Aorta (tissue), 5 donors: ENCODE measurements at regions of chr22 and their contacts with region 1.

Region 1: GRCh38 chr22:28800308-28801077 is at the start of gene XBP1:
- DNase-seq: peak; percentile 97 to 98
- ATAC-seq: peak; percentile 98
- H3K4me3 ChIP-seq: peak within 1 kb of the TSS; percentile 83 to 91
- H3K27ac ChIP-seq: peak within 1 kb of the TSS; percentile 97 to 100
- H3K4me1 ChIP-seq: peaks cover 0 to 4% of the 10 kb centered on the region in 2 donors
- H3K27me3 ChIP-seq: no peaks in the 10 kb centered on the region
- total RNA-seq, gene XBP1: 118 to 143 TPM

Region 2: DNA sequence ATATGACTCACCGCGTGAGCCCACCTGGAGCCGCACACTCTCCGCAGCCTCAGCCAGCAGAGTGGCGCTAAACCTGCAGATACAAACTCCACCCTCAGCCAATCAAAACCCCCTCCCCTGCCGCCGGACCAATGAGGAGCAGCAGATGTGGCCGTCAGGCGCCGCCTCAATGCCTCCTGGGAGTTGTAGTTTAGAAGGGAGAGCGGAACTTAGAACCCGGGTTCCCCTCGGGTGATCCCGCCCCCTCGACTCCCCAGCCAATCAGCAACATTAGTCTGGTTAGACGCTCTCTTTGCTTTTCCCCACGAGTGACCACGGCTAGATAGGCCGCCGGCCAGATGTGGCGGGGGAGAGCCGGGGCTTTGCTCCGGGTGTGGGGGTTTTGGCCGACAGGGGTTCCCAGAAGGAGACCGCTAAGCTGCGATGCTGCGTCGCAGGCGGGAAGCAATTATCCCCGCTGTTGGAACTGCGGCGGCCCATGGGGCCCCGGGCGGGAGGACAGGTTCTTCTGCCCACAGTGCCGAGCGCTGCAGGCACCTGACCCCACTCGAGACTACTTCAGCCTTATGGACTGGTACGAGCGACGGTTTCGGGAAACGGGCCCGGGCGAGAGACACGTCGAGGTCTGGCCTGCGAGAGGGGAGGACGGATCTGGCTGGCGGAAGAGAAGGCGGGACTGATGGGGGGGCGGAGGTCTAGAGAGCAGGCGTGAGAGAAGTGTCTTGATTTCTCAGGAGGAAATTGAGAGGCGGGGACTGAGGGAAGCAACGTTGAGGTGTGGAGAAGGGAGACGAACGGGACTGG is 58.5 kb before region 1 on chr22 and contains the starts of genes CHEK2 and HSCB:
- intact Hi-C with region 1: loop called in 1 of 2 experiments (anchors 1 kb)
- DNase-seq: peak; percentile 98 to 99
- ATAC-seq: peak; percentile 99
- H3K4me3 ChIP-seq: peak within 1 kb of the TSS; percentile 62 to 64
- H3K27ac ChIP-seq: peak within 1 kb of the TSS; percentile 70 to 94
- H3K4me1 ChIP-seq: no peaks in the 10 kb centered on the region
- H3K27me3 ChIP-seq: no peaks in the 10 kb centered on the region
- total RNA-seq, gene CHEK2: 6.7 to 15.3 TPM
- total RNA-seq, gene HSCB: 10.3 to 12.0 TPM

Region 3: GRCh38 chr22:28772633-28773460 is 27.6 kb before region 1 on chr22 and contains the start of gene CCDC117:
- intact Hi-C with region 1: loop called in 1 of 2 experiments (anchors 2 kb)
- DNase-seq: peak; percentile 98
- ATAC-seq: peak; percentile 97
- H3K4me3 ChIP-seq: peak within 1 kb of the TSS; percentile 84 to 99
- H3K27ac ChIP-seq: peak within 1 kb of the TSS; percentile 91 to 97
- H3K4me1 ChIP-seq: peaks cover 0 to 1% of the 10 kb centered on the region in 2 donors
- H3K27me3 ChIP-seq: no peaks in the 10 kb centered on the region
- total RNA-seq, gene CCDC117: 20.3 to 26.9 TPM

Region 4: DNA sequence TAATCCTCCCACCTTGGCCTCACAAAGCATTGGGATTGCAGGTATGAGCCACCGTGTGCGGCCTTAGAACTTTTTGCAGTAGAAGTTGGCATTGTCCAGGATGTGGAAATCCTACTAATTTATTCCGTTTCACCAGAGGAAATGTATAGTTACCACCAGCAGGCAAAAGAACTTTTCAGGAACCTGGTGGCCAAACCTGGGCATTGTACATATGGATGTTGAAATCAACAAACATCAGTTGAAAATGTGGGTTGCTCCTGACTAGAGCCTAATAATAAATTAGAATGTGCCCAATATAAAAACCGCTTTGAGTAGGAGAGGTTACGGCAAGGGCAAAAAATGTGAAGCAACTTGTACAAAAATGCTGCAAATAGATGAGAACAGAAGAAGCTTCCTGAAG is 40.6 kb after region 1 on chr22:
- intact Hi-C with region 1: no loop called
- DNase-seq: no peak
- ATAC-seq: no peak
- H3K4me3 ChIP-seq: no peak overlapping the region
- H3K27ac ChIP-seq: no peak overlapping the region
- H3K4me1 ChIP-seq: no peaks in the 10 kb centered on the region
- H3K27me3 ChIP-seq: no peaks in the 10 kb centered on the region